ENCODE measurements at regions of chr10 and their contacts with region 1.

Region 1: DNA sequence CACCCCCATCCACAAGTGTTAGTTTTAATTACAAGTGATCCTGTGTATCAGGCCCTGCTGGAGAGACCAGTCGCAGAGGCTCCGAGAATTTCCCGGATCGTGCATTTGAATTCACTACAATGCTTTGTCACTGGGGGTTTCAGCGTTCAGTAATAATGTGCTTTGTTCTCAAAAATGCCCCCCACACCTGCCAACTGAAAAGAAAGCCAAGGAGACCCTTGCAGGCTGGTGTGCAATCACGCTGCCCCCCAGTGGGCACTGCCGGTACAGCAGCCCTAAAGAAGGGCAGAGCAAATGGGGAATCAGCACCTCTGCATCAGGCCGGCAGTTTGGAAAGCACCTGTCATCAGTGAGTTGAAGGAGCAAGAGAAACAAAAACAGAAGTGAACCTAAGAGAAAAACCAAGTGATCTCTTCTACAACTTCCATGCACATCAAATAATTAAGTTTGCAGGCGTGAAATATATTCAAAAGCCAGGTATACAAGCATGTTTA is 177.6 kb downstream of the PARD3 start:
- DNase-seq: peak; percentile 75
- CTCF ChIP-seq: peak; percentile 95

Region 2: GRCh38 chr10:33330543-33331378 is 1306.7 kb before region 1 on chr10:
- CTCF ChIA-PET with region 1: interaction called, 54 read pairs
- POLR2A ChIA-PET with region 1: no interaction called
- DNase-seq: peak; percentile 41
- CTCF ChIP-seq: peak; percentile 85

Region 3: GRCh38 chr10:34612446-34612845 is 25.0 kb before region 1 on chr10:
- CTCF ChIA-PET with region 1: interaction called, 12 read pairs
- POLR2A ChIA-PET with region 1: no interaction called
- DNase-seq: no peak
- CTCF ChIP-seq: no peak

Region 4: DNA sequence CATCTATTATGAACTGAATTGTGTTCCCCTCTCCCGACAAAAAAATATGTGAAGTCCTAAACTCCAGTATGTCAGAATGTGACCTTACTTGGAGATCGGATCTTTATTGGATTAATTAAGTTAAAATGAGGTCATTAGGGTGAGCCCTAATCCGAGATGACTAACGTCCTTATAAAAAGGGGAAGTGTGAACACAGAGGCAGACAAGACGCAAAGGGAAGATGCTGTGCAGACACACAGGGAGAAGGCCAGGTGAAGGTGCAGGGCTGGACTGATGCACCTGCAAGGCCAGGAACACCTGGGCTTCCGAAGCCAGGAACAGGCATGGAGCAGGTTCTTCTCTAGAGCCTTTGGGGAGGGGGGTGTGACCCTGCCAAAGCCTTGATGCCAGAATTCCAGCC is 10.1 kb before region 1 on chr10:
- CTCF ChIA-PET with region 1: interaction called, 25 read pairs
- POLR2A ChIA-PET with region 1: no interaction called
- DNase-seq: peak; percentile 32
- CTCF ChIP-seq: no peak

Region 5: DNA sequence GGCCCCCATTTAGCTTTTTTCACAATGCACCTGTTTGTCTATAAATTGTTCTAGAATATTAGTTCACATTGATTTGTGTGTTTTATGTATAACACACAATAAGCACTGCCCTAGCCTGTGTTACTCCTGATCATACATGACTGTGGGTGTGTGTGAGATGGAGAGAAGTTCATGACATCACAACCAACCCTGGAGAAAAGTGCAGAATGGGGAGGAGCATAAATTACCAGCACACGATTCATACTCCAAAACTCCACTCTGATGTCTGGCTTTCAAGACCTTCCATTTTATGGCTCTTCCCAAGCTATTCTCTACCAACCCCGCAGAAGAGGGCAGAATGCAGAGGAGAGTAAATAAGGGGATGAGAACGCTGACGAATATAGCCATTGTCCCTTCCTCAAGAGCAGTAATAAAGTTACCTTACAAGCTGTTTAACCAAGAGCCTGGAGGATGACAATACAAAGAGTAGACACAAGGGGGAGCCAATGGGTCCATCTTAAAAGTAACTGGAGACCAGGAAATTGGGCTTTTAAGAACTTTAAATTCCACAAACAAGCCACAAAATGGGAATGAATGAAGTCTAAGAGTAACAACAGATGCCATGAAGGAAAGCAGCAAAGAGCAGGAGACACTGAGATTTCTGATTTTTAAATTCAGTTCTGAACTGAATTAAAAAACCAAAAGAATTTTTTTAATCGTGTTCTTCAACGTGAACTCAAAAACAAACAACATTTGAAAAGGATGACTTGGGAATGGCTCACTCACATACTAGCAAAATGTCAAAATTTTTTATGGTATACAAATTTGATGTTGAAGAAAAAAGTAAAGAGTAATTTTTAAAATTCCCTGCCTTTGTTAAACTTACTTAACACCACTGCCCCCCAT is 18.1 kb after region 1 on chr10:
- CTCF ChIA-PET with region 1: interaction called, 45 read pairs
- POLR2A ChIA-PET with region 1: no interaction called
- DNase-seq: peak; percentile 41
- CTCF ChIP-seq: peak; percentile 55

Region 6: GRCh38 chr10:34769899-34770298 is 132.4 kb after region 1 on chr10:
- CTCF ChIA-PET with region 1: no interaction called
- POLR2A ChIA-PET with region 1: no interaction called
- DNase-seq: no peak
- CTCF ChIP-seq: no peak

Region 7: DNA sequence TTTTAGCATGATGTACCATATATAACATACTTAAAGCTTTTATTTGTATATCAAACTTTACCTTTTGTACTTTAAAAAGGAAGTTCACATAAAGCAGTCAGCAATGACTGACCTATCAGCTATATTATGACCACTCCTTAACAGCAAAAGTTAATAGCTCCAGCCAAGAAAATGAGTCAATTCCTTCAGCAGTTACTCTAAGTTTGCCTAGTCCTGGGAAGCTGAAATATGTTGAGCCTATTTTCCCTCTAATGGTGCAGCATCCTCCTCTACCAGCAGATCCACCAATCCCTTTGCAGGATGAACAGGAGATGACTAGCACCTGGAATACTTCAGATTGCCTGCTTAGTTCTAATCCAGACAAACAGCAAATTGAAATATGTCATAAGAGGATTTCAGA is 388.5 kb after region 1 on chr10:
- CTCF ChIA-PET with region 1: no interaction called
- POLR2A ChIA-PET with region 1: no interaction called
- DNase-seq: no peak
- CTCF ChIP-seq: no peak

Measured in GM10248 (cell line).